OCI-LY7 (cell line): ENCODE measurements at regions of chr6 and their contacts with region 1.

Region 1: GRCh38 chr6:156953479-156954146 is 176.4 kb downstream of the ARID1B start:
- DNase-seq: peak; percentile 19
- H3K4me3 ChIP-seq: no peak overlapping the region
- H3K27ac ChIP-seq: no peak overlapping the region
- H3K4me1 ChIP-seq: peaks cover 13% of the 10 kb centered on the region
- CTCF ChIP-seq: no peak; the same call in 1 of the 2 replicates

Region 2: GRCh38 chr6:156899532-156900135 is 54.0 kb before region 1 on chr6:
- CTCF ChIA-PET with region 1: no interaction called
- POLR2A ChIA-PET with region 1: no interaction called
- intact Hi-C with region 1: no loop called
- DNase-seq: no peak
- H3K4me3 ChIP-seq: no peak overlapping the region
- H3K27ac ChIP-seq: no peak overlapping the region
- H3K4me1 ChIP-seq: no peaks in the 10 kb centered on the region
- CTCF ChIP-seq: peak; percentile 53

Region 3: DNA sequence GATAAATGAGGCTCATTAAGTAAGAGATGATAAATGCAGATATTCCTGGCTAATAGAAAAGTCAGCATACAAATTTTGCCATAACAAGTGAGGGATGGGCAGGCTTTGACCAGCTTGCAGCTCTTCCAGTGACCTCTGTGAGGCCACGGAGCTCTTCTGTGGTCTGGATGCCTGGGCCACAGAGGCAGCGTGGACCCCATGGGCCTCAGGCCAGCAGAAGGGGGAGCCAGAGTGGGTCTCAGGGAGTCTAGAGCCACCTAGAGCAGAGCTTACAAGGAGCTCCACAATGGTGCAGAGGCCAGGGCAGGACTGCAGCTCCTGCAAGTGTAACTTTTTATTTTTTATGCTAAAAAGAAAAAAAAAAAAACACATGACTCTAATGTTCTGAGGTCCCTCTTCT is 11.3 kb before region 1 on chr6:
- CTCF ChIA-PET with region 1: no interaction called
- POLR2A ChIA-PET with region 1: interaction called, 14 read pairs
- intact Hi-C with region 1: no loop called
- DNase-seq: peak; percentile 69
- H3K4me3 ChIP-seq: no peak overlapping the region
- H3K27ac ChIP-seq: no peak overlapping the region
- H3K4me1 ChIP-seq: no peaks in the 10 kb centered on the region
- CTCF ChIP-seq: peak; percentile 69

Region 4: GRCh38 chr6:156963712-156964700 is 10.4 kb after region 1 on chr6:
- CTCF ChIA-PET with region 1: no interaction called
- POLR2A ChIA-PET with region 1: interaction called, 18 read pairs
- intact Hi-C with region 1: no loop called
- DNase-seq: peak; percentile 34
- H3K4me3 ChIP-seq: peak overlapping the region; percentile 40
- H3K27ac ChIP-seq: no peak overlapping the region
- H3K4me1 ChIP-seq: peaks cover 14% of the 10 kb centered on the region
- CTCF ChIP-seq: no peak

Region 5: DNA sequence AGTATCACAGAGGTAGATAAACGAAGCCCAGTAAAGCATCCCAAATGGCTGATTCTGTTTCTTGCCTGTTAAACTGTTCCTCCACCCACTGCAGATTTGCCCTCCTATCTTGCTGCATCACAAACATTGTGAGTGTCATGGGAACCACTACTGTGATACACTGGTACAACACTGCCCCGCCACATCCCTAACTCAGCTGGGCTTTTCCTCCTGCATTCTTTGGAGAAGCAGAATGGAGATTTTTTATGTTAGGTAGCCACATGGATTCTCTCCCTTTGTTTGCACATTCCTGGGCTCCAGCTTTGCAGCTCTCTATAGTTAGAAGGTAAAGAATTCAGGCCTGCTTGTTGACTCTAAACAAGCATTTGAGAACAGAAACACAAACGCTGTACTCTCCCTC is 135.6 kb after region 1 on chr6:
- CTCF ChIA-PET with region 1: no interaction called
- POLR2A ChIA-PET with region 1: no interaction called
- intact Hi-C with region 1: no loop called
- DNase-seq: no peak
- H3K4me3 ChIP-seq: no peak overlapping the region
- H3K27ac ChIP-seq: no peak overlapping the region
- H3K4me1 ChIP-seq: peaks cover 10% of the 10 kb centered on the region
- CTCF ChIP-seq: no peak